ENCODE measurements at regions of chr11 and their contacts with region 1.

Region 1: GRCh38 chr11:64652586-64653387 is 61.8 kb downstream of the SLC22A12 start:
- DNase-seq: peak; percentile 47
- H3K4me3 Mint-ChIP-seq: no peak overlapping the region
- H3K27ac Mint-ChIP-seq: no peak overlapping the region
- H3K4me1 Mint-ChIP-seq: no peaks in the 10 kb centered on the region
- H3K27me3 Mint-ChIP-seq: peaks cover 17% of the 10 kb centered on the region

Region 2: GRCh38 chr11:64036087-64037026 is 616.4 kb before region 1 on chr11:
- intact Hi-C with region 1: no loop called
- DNase-seq: no peak
- H3K4me3 Mint-ChIP-seq: no peak overlapping the region
- H3K27ac Mint-ChIP-seq: no peak overlapping the region
- H3K4me1 Mint-ChIP-seq: no peaks in the 10 kb centered on the region
- H3K27me3 Mint-ChIP-seq: peaks cover 18% of the 10 kb centered on the region

Region 3: GRCh38 chr11:64448599-64449556 is 203.9 kb before region 1 on chr11:
- intact Hi-C with region 1: loop called (anchors 1 kb)
- DNase-seq: peak; percentile 53
- H3K4me3 Mint-ChIP-seq: peak overlapping the region; percentile 77
- H3K27ac Mint-ChIP-seq: no peak overlapping the region
- H3K4me1 Mint-ChIP-seq: peaks cover 21% of the 10 kb centered on the region
- H3K27me3 Mint-ChIP-seq: peaks cover 20% of the 10 kb centered on the region

Region 4: DNA sequence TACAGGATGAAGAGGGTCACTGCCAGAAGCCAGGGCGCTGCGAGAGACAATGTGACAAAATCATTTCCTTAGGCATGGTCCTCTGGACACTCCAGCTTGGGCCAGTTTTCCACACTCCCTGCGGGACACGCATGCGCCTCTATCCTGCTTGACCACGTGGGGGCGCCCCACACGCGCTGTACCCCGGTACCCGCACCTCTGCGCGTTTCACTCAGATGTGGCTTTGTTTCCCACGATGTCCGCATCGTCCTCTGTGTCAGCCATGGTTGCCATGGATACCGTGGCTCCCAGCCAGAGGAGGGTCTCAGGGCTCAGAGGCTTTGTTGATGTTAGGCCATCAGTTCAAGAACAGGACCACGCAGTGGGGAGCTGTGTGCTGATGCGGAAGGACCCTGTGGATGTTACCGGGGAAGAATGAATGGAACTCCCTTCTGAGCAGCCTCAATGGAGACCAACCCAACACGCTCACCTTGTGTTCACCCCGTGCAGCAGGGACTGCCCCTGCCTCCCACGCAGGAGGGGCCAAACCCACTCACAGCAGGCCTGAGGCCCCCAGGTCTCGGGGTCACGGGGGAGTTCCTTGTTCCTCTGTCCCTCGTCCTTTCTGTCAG is 162.9 kb before region 1 on chr11:
- intact Hi-C with region 1: loop called (anchors 1 kb)
- DNase-seq: peak; percentile 10
- H3K4me3 Mint-ChIP-seq: no peak overlapping the region
- H3K27ac Mint-ChIP-seq: no peak overlapping the region
- H3K4me1 Mint-ChIP-seq: peaks cover 18% of the 10 kb centered on the region
- H3K27me3 Mint-ChIP-seq: peaks cover 26% of the 10 kb centered on the region

Region 5: DNA sequence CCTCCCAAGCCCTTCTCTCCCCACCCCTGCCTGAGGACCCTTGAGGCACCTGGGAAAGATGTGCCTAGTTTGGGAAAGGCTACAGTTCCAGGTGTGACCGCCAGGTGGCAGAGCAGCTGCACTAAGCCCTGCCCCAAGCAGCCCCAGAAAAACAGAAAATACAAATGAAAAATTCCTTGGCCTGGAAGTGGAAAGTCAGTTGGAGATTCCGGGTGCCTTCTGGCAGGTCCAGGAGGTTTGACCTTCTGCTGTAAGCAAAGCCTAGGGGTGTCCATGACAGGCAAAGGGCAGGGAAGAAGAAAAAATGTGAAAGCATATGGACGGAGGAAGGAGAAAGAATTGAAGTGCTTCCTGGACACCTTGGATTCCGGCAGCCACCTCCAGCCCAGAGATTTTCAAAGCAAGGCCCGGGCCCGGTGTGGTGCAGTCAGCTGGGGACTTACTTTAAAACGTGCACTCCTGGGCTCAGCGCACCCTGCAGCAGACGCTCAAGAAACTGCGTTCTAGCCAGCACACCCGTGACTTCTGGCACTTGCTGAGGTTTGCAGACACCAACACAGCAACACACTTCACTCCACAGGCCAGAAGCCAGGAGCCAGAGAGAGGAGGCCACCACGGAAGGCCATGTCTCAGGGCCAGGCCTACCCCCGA is 99.1 kb before region 1 on chr11:
- intact Hi-C with region 1: loop called (anchors 1 kb)
- DNase-seq: peak; percentile 10
- H3K4me3 Mint-ChIP-seq: no peak overlapping the region
- H3K27ac Mint-ChIP-seq: no peak overlapping the region
- H3K4me1 Mint-ChIP-seq: no peaks in the 10 kb centered on the region
- H3K27me3 Mint-ChIP-seq: peaks cover under 1% of the 10 kb centered on the region

Region 6: DNA sequence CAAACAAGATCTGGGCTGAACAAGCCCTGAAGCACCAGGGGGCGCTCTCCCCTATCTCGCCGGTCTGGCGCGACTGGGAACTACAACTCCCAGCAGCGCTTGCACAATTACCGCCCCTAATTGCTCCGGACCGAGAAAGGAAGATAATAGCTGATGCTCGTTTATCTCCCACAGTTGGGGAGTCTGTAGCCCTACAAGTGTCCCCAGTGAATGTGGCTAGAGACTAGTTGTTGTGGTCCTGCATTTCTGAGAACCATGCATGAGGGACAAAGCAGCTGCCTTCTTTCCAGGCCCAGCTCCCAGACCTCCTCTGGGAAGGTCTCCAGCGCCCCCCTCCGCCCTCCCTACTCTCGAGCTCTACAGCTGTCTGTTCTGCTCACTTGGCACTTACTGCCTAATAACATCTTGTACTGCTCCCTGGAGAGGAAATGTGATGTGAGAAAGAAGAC is 35.8 kb after region 1 on chr11:
- intact Hi-C with region 1: no loop called
- DNase-seq: peak; percentile 82
- H3K4me3 Mint-ChIP-seq: no peak overlapping the region
- H3K27ac Mint-ChIP-seq: no peak overlapping the region
- H3K4me1 Mint-ChIP-seq: peaks cover 23% of the 10 kb centered on the region
- H3K27me3 Mint-ChIP-seq: peaks cover 20% of the 10 kb centered on the region